ENCODE measurements at regions of chr11 and their contacts with region 1.

Region 1: GRCh38 chr11:61187505-61188130 is 15.7 kb upstream of the PGA3 start:
- DNase-seq: peak; percentile 38 to 91 (median 69)
- ATAC-seq: peak; percentile 78 to 87 (median 84)
- H3K4me3 ChIP-seq: no peak overlapping the region
- H3K4me3 Mint-ChIP-seq: no peak overlapping the region
- H3K27ac ChIP-seq: no peak overlapping the region
- H3K27ac Mint-ChIP-seq: no peak overlapping the region
- H3K4me1 ChIP-seq: no peaks in the 10 kb centered on the region
- H3K4me1 Mint-ChIP-seq: peaks cover 0 to 5% (median 3%) of the 10 kb centered on the region in 3 donors
- H3K27me3 ChIP-seq: peaks cover 0 to 17% of the 10 kb centered on the region in 2 experiments
- H3K27me3 Mint-ChIP-seq: peaks cover 0 to 3% of the 10 kb centered on the region in 2 donors

Region 2: GRCh38 chr11:60970369-60970774 is 217.2 kb before region 1 on chr11:
- CTCF ChIA-PET with region 1: interaction called, 3 to 10 read pairs
- POLR2A ChIA-PET with region 1: no interaction called
- DNase-seq: peak; percentile 61 to 88 (median 77)
- ATAC-seq: peak; percentile 55 to 70 (median 62)
- H3K4me3 ChIP-seq: peak overlapping the region; percentile 79 to 98
- H3K4me3 Mint-ChIP-seq: peak overlapping the region; percentile 92 to 94 (median 93)
- H3K27ac ChIP-seq: peak overlapping the region; percentile 85
- H3K27ac Mint-ChIP-seq: peak overlapping the region; percentile 83 to 85
- H3K4me1 ChIP-seq: peaks cover 18 to 36% of the 10 kb centered on the region in 2 experiments
- H3K4me1 Mint-ChIP-seq: peaks cover 25 to 42% (median 30%) of the 10 kb centered on the region in 3 donors
- H3K27me3 ChIP-seq: no peaks in the 10 kb centered on the region
- H3K27me3 Mint-ChIP-seq: peaks cover 0 to 2% of the 10 kb centered on the region in 2 donors

Region 3: DNA sequence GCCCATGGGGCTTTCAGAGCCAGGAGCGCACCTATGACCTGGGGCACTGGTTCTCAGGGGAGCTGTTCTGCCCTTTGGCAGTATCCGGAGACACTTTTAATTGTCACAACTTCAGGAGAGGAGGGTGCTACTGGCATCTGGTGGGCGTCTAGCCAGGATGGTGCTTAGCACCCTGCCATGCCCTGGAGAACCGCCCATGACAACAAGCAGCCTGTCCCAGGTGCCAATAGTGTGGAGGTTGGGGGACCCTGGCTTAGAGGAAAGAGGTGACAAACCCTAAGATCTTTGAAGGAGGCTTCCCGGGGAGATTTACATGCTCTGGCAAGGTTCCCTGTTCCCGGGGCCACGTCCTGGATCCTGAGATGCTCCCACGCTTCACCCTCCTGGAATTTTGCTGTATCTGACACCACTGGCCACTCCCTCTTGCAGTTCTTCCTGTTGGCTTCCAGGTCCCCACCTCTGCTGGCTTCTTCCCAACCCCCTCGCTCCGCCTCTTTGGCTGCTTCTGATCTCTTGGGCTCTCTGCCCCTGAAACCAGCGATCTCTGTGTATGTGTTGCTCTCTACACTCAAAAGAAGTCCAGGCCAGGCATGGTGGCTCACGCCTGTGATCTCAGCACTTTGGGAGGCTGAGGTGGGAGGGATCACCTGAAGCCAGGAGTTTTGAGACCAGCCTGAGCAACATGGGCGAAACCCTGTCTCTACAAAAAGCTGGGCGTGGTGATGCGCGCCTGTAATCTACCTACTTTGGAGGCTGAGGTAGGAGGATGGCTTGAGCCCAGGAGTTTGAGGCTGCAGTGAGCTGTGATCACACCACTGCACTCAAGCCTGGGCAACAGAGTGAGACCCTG is 672.7 kb after region 1 on chr11:
- CTCF ChIA-PET with region 1: no interaction called
- POLR2A ChIA-PET with region 1: no interaction called
- DNase-seq: no peak
- ATAC-seq: no peak
- H3K4me3 ChIP-seq: no peak overlapping the region
- H3K4me3 Mint-ChIP-seq: no peak overlapping the region
- H3K27ac ChIP-seq: no peak overlapping the region
- H3K27ac Mint-ChIP-seq: no peak overlapping the region
- H3K4me1 ChIP-seq: no peaks in the 10 kb centered on the region
- H3K4me1 Mint-ChIP-seq: no peaks in the 10 kb centered on the region
- H3K27me3 ChIP-seq: peaks cover 0 to 1% of the 10 kb centered on the region in 2 experiments
- H3K27me3 Mint-ChIP-seq: no peaks in the 10 kb centered on the region